ENCODE measurements at regions of chr12 and their contacts with region 1.

Region 1: DNA sequence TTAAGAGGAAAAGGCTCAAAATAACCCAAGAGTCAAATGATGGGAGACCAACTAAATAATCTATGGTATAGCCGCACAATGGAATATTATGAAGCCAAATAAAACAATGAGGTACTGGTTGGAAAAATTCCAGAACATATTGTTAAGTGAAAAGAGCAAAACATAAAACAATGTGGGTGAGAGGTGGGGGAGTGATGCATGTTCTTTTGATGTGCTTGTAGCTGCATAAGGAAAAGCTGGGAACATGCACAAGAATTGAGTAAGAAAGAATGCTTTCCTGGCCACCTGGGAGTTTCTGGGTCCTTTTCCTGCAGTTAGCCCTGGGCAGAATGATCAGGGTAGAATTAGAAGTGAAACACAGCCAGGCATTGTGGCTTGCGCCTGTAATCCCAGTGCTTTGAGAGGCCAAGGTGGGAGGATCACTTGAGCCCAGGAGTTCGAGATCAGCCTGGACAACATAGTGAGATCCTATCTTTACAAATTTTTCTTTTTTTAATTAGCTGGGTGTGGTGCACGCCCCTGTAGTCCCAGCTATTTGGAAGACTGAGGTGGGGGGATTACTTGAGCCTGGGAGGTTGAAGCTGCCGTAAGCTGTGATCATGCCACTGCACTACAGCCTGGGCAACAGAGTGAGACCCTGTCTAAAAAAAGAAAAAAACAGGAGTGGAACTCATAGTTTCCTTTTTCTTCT is 7.9 kb downstream of the ABCB9 start:
- DNase-seq: no peak
- H3K4me3 ChIP-seq: no peak overlapping the region
- CTCF ChIP-seq: no peak
- POLR2A ChIP-seq: no peak

Region 2: DNA sequence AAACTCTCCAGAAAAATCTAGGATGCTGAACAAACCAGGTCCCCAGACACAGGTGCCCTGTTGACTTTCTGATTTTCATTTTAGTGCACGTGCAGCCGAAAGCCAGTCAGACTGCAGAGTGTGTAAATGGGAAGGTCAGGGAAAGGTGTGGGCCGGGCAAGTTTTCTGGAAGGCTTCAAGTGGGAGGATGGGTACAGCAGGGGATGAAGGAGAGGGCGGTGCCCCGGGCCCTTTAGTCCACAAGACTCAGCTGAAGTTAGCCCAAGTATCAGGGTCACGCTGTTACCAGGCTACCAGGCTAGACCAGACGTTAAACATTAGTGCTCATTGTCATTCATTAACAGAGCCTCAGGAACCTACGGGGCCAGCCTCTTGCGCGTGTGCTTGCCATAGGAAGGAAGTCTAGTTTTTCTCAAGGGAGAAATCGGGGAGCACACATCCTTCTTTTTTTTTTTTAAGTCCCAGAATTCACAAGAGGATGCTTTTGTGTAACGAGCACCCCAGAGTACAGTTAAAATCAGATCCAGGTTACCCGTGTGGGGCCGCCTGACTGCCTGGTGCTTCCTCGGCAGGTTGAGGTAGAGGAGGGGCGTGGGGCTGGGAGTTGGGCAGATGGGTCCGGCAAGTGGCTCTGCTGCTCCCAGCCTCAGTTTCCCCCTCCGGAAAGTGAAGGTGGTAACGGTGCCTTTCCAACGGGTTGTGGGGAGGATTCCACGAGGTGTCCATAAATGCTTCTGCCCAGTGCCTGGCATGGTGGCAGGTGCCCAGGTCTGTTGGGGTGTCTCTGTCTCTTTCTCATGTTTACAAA is 917.6 kb before region 1 on chr12:
- intact Hi-C with region 1: no loop called
- DNase-seq: no peak
- H3K4me3 ChIP-seq: no peak overlapping the region
- CTCF ChIP-seq: no peak
- POLR2A ChIP-seq: no peak

Region 3: DNA sequence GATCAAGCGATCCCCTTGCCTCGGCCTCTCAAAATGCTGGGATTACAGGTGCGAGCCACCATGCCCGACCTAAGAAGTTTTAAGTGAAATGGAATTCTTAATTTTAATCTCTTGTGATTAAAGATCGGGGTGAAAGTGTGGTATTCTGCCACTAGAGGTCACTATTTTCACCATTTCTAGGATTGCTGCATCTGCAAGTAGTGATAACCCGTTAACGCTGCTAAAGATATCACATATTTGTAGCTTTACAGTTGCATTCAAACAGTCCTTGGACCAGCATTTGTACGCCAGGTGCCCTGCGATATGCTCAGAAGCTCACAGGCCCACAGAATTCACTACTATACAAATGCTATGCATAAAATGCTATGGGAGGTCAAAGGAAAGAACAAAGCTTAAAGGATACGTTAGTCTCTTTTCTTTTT is 164.6 kb before region 1 on chr12:
- intact Hi-C with region 1: loop called (anchors 5 kb)
- DNase-seq: no peak
- H3K4me3 ChIP-seq: no peak overlapping the region
- CTCF ChIP-seq: no peak
- POLR2A ChIP-seq: no peak

Region 4: GRCh38 chr12:122902854-122903692 is 55.3 kb before region 1 on chr12:
- intact Hi-C with region 1: no loop called
- DNase-seq: no peak
- H3K4me3 ChIP-seq: no peak overlapping the region
- CTCF ChIP-seq: no peak
- POLR2A ChIP-seq: no peak

Region 5: GRCh38 chr12:123141615-123142517 is 183.5 kb after region 1 on chr12:
- intact Hi-C with region 1: no loop called
- DNase-seq: peak in 1 of 2 donors; percentile 86
- H3K4me3 ChIP-seq: no peak overlapping the region
- CTCF ChIP-seq: no peak
- POLR2A ChIP-seq: no peak

Region 6: GRCh38 chr12:123337070-123337469 is 378.7 kb after region 1 on chr12:
- intact Hi-C with region 1: no loop called
- DNase-seq: no peak
- H3K4me3 ChIP-seq: no peak overlapping the region
- CTCF ChIP-seq: no peak
- POLR2A ChIP-seq: no peak

Measured in lower leg skin (tissue), 4 donors.